ENCODE measurements at regions of chr2 and their contacts with region 1.

Region 1: DNA sequence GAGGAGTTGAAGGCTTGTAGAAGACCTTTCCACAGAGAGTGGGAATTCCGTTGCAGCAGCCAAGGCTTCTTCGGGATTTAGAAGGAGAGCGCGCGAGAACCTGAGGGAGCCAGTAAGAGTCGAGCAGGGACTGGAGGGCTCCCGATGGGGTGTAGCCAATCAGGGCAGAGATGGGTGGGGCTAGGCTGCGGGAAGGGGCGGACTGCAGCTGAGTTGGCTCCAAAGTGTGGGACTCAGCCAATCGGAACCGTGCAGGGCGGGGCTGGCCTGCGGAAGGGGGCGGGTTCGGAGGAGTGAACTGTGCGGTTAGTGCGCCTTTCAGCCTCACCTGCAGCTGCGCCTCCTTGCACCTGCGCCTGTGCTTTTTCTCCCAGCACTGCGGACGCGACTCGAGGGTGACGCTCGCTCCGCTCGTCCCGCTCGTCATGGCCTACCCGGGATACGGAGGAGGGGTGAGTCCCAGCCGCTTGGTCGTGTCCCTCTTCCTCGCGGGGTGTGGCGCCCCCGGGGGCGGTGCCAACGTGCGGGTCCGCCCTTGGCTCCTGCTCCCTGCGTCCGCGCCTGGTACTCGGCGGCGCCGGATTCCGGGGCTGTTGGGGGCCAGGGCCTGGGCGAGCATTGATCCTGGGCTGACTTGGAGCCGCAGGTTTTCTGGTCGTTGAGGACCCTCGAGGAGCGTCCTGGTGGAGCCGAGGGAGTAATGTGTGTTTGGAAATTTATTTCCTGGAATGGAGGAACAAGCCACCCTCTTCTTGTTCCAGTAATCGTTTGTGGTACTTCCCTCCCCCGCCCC is at the start of gene GCA:
- DNase-seq: peak; percentile 98
- ATAC-seq: peak; percentile 98
- H3K4me3 ChIP-seq: peak within 1 kb of the TSS; percentile 62 to 93 (median 89)
- H3K4me3 Mint-ChIP-seq: peak within 1 kb of the TSS; percentile 91
- H3K27ac ChIP-seq: peak within 1 kb of the TSS; percentile 80 to 86
- H3K27ac Mint-ChIP-seq: peak within 1 kb of the TSS; percentile 90
- H3K4me1 ChIP-seq: peaks cover 11 to 16% of the 10 kb centered on the region in 2 donors
- H3K4me1 Mint-ChIP-seq: peaks cover 19% of the 10 kb centered on the region
- H3K27me3 ChIP-seq: no peaks in the 10 kb centered on the region
- H3K27me3 Mint-ChIP-seq: no peaks in the 10 kb centered on the region
- CTCF ChIP-seq: no peak
- total RNA-seq, gene GCA: 31.6 and 33.0 TPM in 2 replicates

Region 2: DNA sequence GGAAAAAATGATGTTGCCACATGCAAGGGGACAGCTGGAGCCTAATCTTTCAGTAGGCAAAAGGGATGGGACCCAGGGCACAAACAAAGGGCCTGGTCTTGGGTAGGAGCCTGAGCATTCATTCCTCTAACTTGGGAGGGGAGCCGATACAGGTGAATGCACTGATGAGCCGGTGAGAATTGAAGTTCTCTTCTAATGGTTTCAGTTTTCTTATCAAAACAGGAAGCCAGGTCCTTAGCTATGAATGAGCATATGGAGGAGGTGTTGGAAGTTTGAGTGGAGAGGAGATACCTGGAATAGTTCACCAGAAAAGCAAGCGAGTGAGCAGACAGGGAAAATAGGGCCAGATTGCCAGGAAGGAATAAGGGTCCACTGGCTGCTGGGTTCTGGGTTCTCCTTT is 280.1 kb before region 1 on chr2:
- CTCF ChIA-PET with region 1: no interaction called
- POLR2A ChIA-PET with region 1: no interaction called
- intact Hi-C with region 1: no loop called
- DNase-seq: peak; percentile 37
- ATAC-seq: peak; percentile 43
- H3K4me3 ChIP-seq: no peak overlapping the region
- H3K4me3 Mint-ChIP-seq: no peak overlapping the region
- H3K27ac ChIP-seq: peak overlapping the region in 1 of 2 donors; percentile 11
- H3K27ac Mint-ChIP-seq: no peak overlapping the region
- H3K4me1 ChIP-seq: peaks cover 11 to 16% of the 10 kb centered on the region in 2 donors
- H3K4me1 Mint-ChIP-seq: peaks cover 26% of the 10 kb centered on the region
- H3K27me3 ChIP-seq: no peaks in the 10 kb centered on the region
- H3K27me3 Mint-ChIP-seq: no peaks in the 10 kb centered on the region
- CTCF ChIP-seq: no peak

Region 3: DNA sequence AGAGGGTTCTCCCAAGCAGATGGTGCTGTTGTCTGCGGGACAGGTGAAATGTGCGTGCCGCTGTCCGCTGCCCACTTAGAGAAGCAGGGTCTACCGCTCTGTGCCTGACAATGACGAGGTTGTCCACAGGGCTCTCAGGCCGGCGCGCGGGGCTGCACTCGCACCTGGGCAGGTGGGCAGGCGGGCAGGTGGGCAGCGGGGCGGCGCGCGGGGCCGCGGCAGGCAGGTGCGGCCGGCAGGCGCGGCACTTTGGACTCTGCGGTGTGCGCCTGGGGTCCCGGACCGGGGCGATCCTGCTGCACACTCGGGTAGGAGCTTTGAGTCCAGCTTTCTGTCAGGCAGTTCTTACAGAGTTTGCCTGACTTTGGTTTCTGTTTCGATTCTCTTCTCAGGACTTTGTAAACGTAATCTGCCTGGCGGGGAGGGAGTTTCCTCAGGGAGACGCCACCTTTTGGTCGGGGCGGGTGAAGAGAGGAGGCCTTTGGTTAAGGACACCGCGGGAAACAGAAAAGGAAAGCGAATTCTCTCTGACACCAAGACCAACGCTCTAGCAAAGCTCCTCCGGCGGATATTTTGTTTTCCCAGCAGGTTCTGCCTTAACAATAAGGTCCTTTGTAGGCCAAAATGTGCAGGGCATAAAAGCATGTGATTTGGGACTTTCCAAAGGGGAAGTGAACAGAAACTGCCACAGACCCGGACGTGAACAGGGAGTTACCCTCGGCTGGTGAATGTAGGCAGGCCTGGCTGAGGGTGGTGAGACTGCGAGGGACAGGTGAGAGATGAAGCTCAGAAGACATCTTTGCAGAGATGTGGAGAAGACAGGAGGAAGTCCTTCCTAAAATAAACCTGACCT is 25.5 kb before region 1 on chr2 and contains the start of gene IFIH1:
- CTCF ChIA-PET with region 1: interaction called, 7 read pairs
- POLR2A ChIA-PET with region 1: interaction called, 11 read pairs
- intact Hi-C with region 1: loop called (anchors 1 kb)
- DNase-seq: peak; percentile 97
- ATAC-seq: peak; percentile 91
- H3K4me3 ChIP-seq: peak within 1 kb of the TSS; percentile 77 to 97 (median 86)
- H3K4me3 Mint-ChIP-seq: peak within 1 kb of the TSS; percentile 96
- H3K27ac ChIP-seq: peak within 1 kb of the TSS; percentile 99 to 100
- H3K27ac Mint-ChIP-seq: peak within 1 kb of the TSS; percentile 99
- H3K4me1 ChIP-seq: peaks cover 34 to 48% of the 10 kb centered on the region in 2 donors
- H3K4me1 Mint-ChIP-seq: peaks cover 64% of the 10 kb centered on the region
- H3K27me3 ChIP-seq: no peaks in the 10 kb centered on the region
- H3K27me3 Mint-ChIP-seq: no peaks in the 10 kb centered on the region
- CTCF ChIP-seq: peak; percentile 25
- total RNA-seq, gene IFIH1: 54.8 and 59.7 TPM in 2 replicates

Region 4: DNA sequence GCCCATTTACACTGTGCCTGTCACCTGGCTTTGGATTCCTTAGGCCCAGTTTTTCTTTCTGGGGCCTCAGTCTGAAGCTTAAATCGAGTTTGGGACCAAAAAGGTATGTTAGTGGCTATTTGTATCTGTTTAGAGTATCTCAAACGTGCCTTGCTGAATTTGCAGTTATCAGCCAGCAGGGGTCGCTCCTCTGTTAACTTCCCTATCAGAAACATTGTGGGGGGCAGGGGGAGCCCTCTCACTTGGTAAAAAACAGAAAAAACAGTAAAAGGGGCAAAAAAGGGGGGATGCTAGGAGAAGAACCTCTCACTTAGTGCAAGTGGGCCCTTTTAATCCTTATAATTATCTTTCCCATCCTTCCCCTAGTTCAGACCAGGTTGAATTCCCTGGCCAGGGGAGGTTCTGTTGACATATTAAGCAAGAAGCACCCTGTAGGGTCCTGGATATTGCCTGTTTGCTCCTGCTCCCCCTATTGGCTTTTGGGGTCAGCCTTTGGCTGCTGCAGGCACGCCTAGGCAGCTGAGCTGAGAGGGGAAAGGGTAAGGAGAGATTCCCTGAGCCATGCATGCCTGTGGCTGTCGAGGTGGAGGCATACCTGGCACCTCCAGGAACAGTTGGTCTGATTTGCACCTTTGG is 16.8 kb before region 1 on chr2:
- CTCF ChIA-PET with region 1: interaction called, 10 read pairs
- POLR2A ChIA-PET with region 1: no interaction called
- intact Hi-C with region 1: no loop called
- DNase-seq: peak; percentile 49
- ATAC-seq: no peak
- H3K4me3 ChIP-seq: no peak overlapping the region
- H3K4me3 Mint-ChIP-seq: no peak overlapping the region
- H3K27ac ChIP-seq: no peak overlapping the region
- H3K27ac Mint-ChIP-seq: no peak overlapping the region
- H3K4me1 ChIP-seq: peaks cover 0 to 19% of the 10 kb centered on the region in 2 donors
- H3K4me1 Mint-ChIP-seq: peaks cover 4% of the 10 kb centered on the region
- H3K27me3 ChIP-seq: no peaks in the 10 kb centered on the region
- H3K27me3 Mint-ChIP-seq: no peaks in the 10 kb centered on the region
- CTCF ChIP-seq: peak; percentile 63

Region 5: GRCh38 chr2:162365392-162365791 is 21.4 kb after region 1 on chr2:
- CTCF ChIA-PET with region 1: no interaction called
- POLR2A ChIA-PET with region 1: no interaction called
- intact Hi-C with region 1: no loop called
- DNase-seq: no peak
- ATAC-seq: no peak
- H3K4me3 ChIP-seq: no peak overlapping the region
- H3K4me3 Mint-ChIP-seq: no peak overlapping the region
- H3K27ac ChIP-seq: no peak overlapping the region
- H3K27ac Mint-ChIP-seq: no peak overlapping the region
- H3K4me1 ChIP-seq: no peaks in the 10 kb centered on the region
- H3K4me1 Mint-ChIP-seq: no peaks in the 10 kb centered on the region
- H3K27me3 ChIP-seq: no peaks in the 10 kb centered on the region
- H3K27me3 Mint-ChIP-seq: no peaks in the 10 kb centered on the region
- CTCF ChIP-seq: no peak

Region 6: GRCh38 chr2:162475661-162476060 is 131.6 kb after region 1 on chr2:
- CTCF ChIA-PET with region 1: no interaction called
- POLR2A ChIA-PET with region 1: no interaction called
- intact Hi-C with region 1: no loop called
- DNase-seq: no peak
- ATAC-seq: no peak
- H3K4me3 ChIP-seq: no peak overlapping the region
- H3K4me3 Mint-ChIP-seq: no peak overlapping the region
- H3K27ac ChIP-seq: no peak overlapping the region
- H3K27ac Mint-ChIP-seq: no peak overlapping the region
- H3K4me1 ChIP-seq: no peaks in the 10 kb centered on the region
- H3K4me1 Mint-ChIP-seq: no peaks in the 10 kb centered on the region
- H3K27me3 ChIP-seq: no peaks in the 10 kb centered on the region
- H3K27me3 Mint-ChIP-seq: no peaks in the 10 kb centered on the region
- CTCF ChIP-seq: no peak

Region 7: DNA sequence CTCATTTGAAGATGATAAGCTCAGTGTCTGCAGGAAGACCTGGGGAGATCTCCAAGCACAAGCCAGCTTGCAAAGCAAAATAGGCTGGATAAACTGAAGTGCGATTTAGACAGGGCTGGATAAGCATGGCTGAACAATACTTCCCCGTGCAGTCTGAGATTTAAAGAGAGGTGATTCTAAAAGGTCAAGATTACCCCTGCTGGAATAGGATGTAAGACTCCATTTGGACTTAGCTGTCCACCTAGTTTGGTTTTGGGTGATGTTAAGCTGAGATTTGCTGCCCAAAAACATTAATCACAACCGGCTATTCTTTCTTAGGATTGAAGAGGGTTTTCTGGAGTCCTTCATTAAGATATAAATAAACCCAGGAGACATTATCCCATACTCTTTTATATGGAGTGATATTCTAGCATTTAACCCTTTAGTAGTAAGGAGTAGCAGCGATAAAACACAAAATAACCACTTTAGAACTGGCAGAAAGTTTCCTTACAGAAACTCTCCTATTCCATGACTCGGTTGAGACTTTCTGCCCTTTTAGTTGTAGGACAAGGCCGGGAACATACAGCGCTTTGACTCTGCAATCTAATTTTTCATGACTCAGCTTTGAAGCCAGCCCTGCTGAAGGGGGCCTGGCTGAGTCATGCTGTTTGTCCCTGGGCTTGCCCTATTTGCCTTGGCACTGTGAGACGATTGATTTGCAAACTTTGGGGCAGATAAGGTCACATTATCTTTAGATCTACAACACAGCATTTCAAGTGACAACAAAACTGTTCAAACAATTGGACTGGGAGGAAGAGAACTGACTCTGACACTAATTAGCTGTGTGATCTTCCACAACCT is 238.2 kb after region 1 on chr2:
- CTCF ChIA-PET with region 1: no interaction called
- POLR2A ChIA-PET with region 1: no interaction called
- intact Hi-C with region 1: no loop called
- DNase-seq: no peak
- ATAC-seq: no peak
- H3K4me3 ChIP-seq: no peak overlapping the region
- H3K4me3 Mint-ChIP-seq: no peak overlapping the region
- H3K27ac ChIP-seq: no peak overlapping the region
- H3K27ac Mint-ChIP-seq: no peak overlapping the region
- H3K4me1 ChIP-seq: no peaks in the 10 kb centered on the region
- H3K4me1 Mint-ChIP-seq: no peaks in the 10 kb centered on the region
- H3K27me3 ChIP-seq: no peaks in the 10 kb centered on the region
- H3K27me3 Mint-ChIP-seq: no peaks in the 10 kb centered on the region
- CTCF ChIP-seq: no peak